ENCODE measurements at regions of chr12 and their contacts with region 1.

Region 1: DNA sequence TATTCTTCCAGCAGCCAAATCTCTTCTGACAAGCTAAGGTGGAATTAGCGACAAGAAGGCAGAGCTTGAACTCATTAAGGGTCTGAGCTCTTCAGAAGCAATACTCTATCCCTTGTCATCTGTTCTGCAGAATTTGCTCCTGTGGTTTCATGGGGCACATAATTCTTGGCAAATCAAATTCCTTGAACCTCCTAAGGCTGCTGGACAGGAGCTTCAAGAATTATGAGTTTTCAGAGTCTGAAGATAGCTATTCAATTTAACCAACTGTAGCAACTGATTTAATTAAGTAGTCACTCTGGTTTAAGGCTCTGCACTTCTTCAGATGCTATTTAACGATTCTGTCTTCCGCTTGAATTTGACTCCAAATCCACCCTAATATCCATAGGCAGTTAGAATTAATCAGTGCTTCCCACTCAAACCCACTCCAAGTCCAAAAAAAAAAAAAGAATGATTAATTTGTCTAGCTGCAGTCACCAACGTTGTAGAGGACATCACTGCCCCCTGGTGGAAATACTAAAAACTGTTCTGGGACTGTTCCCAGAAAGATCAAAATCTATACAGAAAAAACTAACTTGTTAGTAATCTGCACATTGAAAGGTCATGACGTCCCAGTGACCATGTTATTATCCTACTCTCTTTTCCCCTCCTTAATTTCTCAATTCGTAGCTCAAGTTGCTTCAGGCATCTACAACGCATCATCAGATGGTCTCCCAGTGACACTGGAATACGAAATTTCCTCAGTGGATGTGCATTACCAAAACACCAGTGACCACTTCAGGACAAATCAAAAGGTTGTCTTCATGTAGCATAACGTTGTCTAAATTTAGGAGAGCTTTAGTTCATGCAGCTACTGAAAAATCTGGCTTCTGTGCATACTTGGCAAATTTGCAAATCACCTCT is 169.8 kb downstream of the KIF21A start:
- DNase-seq: peak; percentile 77
- H3K4me3 Mint-ChIP-seq: no peak overlapping the region
- H3K27ac Mint-ChIP-seq: no peak overlapping the region
- H3K4me1 Mint-ChIP-seq: no peaks in the 10 kb centered on the region
- H3K27me3 Mint-ChIP-seq: peaks cover 19% of the 10 kb centered on the region

Region 2: GRCh38 chr12:38921025-38921677 is 352.0 kb before region 1 on chr12:
- intact Hi-C with region 1: loop called (anchors 2 kb)
- DNase-seq: peak; percentile 76
- H3K4me3 Mint-ChIP-seq: no peak overlapping the region
- H3K27ac Mint-ChIP-seq: no peak overlapping the region
- H3K4me1 Mint-ChIP-seq: no peaks in the 10 kb centered on the region
- H3K27me3 Mint-ChIP-seq: peaks cover 4% of the 10 kb centered on the region

Region 3: GRCh38 chr12:39145175-39145999 is 127.7 kb before region 1 on chr12:
- intact Hi-C with region 1: loop called (anchors 2 kb)
- DNase-seq: peak; percentile 84
- H3K4me3 Mint-ChIP-seq: peak overlapping the region; percentile 38
- H3K27ac Mint-ChIP-seq: no peak overlapping the region
- H3K4me1 Mint-ChIP-seq: peaks cover 4% of the 10 kb centered on the region
- H3K27me3 Mint-ChIP-seq: peaks cover 27% of the 10 kb centered on the region

Region 4: DNA sequence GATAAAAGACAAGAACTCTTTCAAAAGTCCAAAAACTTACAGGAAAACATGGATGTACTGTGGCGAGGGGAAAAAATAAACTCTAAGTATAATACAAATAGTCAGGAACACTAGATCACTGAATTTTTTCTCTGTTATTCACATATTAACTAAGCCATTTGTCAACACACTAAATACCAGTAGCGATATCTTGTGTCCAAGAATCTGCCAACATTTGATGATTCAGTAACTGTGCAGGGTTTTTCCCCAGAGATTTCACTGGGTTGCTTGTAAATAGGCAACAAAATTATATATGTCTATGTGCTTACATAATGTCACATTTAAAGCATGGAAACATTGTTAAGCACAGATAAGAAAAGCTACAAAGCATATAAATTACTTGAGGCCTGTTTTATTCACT is 36.1 kb before region 1 on chr12:
- intact Hi-C with region 1: no loop called
- DNase-seq: no peak
- H3K4me3 Mint-ChIP-seq: no peak overlapping the region
- H3K27ac Mint-ChIP-seq: no peak overlapping the region
- H3K4me1 Mint-ChIP-seq: no peaks in the 10 kb centered on the region
- H3K27me3 Mint-ChIP-seq: no peaks in the 10 kb centered on the region

Region 5: DNA sequence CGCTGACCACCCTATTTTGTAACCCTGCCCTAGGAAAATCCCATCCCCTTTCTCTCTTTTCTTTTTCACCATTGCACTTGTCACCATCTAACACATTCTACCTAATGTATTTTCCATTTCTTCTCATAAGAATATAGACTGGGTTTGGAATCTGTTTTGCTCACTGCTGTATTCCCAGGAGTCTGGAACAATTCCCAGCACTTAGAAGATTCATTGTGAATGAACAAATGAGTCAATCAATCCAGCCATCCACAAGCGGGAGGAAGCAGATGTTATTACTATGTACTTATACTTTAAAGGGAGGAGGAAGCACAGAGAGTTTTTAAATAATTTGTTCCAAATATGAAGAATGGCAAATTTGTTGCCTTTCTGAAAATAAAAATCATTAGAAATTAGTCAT is 27.7 kb after region 1 on chr12:
- intact Hi-C with region 1: no loop called
- DNase-seq: no peak
- H3K4me3 Mint-ChIP-seq: no peak overlapping the region
- H3K27ac Mint-ChIP-seq: no peak overlapping the region
- H3K4me1 Mint-ChIP-seq: peaks cover 4% of the 10 kb centered on the region
- H3K27me3 Mint-ChIP-seq: no peaks in the 10 kb centered on the region

Measured in activated CD4-positive, alpha-beta T cell treated with anti-CD3 and anti-CD28 coated beads, Interleukin-2, amount 10 ng/mL, durations not matched to agents 24 days and 14 days (primary cell).